GM23248 (cell line): ENCODE measurements at regions of chr3 and their contacts with region 1.

Region 1: DNA sequence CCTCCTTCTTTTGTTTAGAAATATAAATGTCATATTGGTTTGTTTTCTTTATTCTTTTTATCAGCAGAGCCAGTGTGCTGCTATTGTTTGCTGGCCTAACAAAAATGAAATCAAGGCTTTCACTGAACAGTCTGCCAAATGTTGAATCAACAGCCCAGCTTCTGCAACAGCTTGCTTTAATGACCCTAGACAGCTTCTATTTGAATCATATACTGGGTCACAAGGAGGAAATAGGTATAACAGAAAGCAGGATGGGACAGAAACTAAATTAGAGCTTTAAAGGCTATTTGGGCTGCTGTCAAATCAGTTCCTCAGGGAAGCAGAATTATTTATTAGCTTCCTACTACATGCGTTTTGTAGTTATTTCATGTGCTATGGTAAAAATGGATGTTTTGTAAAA is 12.1 kb upstream of the DNAJC13 start:
- DNase-seq: peak; percentile 60
- H3K4me3 ChIP-seq: no peak overlapping the region
- H3K27ac ChIP-seq: peak overlapping the region; percentile 17
- H3K4me1 ChIP-seq: peaks cover 8% of the 10 kb centered on the region; the same call in 1 of the 2 replicates
- H3K27me3 ChIP-seq: no peaks in the 10 kb centered on the region

Region 2: GRCh38 chr3:132253262-132253878 is 151.8 kb before region 1 on chr3:
- in situ Hi-C with region 1: loop called (anchors 10 kb)
- DNase-seq: peak; percentile 83
- H3K4me3 ChIP-seq: no peak overlapping the region
- H3K27ac ChIP-seq: peak overlapping the region; percentile 97
- H3K4me1 ChIP-seq: peaks cover 34% of the 10 kb centered on the region
- H3K27me3 ChIP-seq: no peaks in the 10 kb centered on the region

Region 3: GRCh38 chr3:133374708-133375397 is 969.7 kb after region 1 on chr3:
- in situ Hi-C with region 1: no loop called
- DNase-seq: no peak
- H3K4me3 ChIP-seq: no peak overlapping the region
- H3K27ac ChIP-seq: no peak overlapping the region
- H3K4me1 ChIP-seq: no peaks in the 10 kb centered on the region
- H3K27me3 ChIP-seq: peaks cover 9% of the 10 kb centered on the region; the same call in 1 of the 2 replicates